ENCODE measurements at regions of chr13 and their contacts with region 1.

Region 1: GRCh38 chr13:50801087-50801931 is 42.2 kb downstream of the DLEU7 start:
- DNase-seq: peak; percentile 13 to 71 (median 56)
- ATAC-seq: peak; percentile 96
- H3K4me3 ChIP-seq: no peak overlapping the region
- H3K4me3 Mint-ChIP-seq: peak overlapping the region in 1 of 10 donors; percentile 39
- H3K27ac ChIP-seq: no peak overlapping the region
- H3K27ac Mint-ChIP-seq: peak overlapping the region in 1 of 9 donors; percentile 20
- H3K4me1 ChIP-seq: peaks cover 0 to 3% of the 10 kb centered on the region in 2 donors
- H3K4me1 Mint-ChIP-seq: peaks cover 0 to 26% (median 6%) of the 10 kb centered on the region in 7 donors
- H3K27me3 ChIP-seq: no peaks in the 10 kb centered on the region
- H3K27me3 Mint-ChIP-seq: peaks cover 0 to 8% (median 0%) of the 10 kb centered on the region in 5 donors

Region 2: DNA sequence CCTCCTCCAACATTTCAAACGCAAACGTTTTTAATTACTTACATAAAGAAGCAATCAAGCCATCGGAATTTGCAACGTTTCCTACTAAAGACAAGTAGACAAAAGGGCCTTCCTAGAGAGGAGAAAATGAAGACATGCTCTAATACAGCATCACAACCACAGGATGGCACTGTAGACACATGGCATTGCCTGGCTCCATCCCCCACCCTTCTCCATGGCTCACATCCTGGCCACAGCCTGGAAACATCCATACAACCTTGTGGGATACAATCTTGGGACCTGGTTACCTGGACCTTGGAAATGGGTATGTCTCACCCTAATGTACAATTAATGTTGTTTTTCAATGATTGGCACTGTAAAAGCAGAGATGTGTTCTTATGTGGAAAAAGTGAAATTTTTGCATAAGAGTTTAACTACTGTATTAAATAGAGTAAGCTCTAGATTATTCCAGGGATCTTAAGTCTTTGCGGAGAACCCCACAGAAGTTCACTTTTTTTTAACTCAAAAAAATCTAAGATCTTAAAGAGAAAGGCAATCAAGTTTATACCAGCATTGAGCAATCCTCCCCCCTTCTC is 1131.5 kb before region 1 on chr13:
- CTCF ChIA-PET with region 1: no interaction called
- POLR2A ChIA-PET with region 1: no interaction called
- intact Hi-C with region 1: loop called in 1 of 2 experiments (anchors 5 kb)
- DNase-seq: peak in 2 of 9 donors; percentile 21 to 37
- ATAC-seq: peak; percentile 76
- H3K4me3 ChIP-seq: no peak overlapping the region
- H3K4me3 Mint-ChIP-seq: no peak overlapping the region
- H3K27ac ChIP-seq: no peak overlapping the region
- H3K27ac Mint-ChIP-seq: no peak overlapping the region
- H3K4me1 ChIP-seq: no peaks in the 10 kb centered on the region
- H3K4me1 Mint-ChIP-seq: peaks cover 0 to 10% (median 3%) of the 10 kb centered on the region in 7 donors
- H3K27me3 ChIP-seq: no peaks in the 10 kb centered on the region
- H3K27me3 Mint-ChIP-seq: no peaks in the 10 kb centered on the region

Region 3: GRCh38 chr13:50116430-50116973 is 684.8 kb before region 1 on chr13:
- CTCF ChIA-PET with region 1: no interaction called
- POLR2A ChIA-PET with region 1: no interaction called
- intact Hi-C with region 1: no loop called
- DNase-seq: no peak
- ATAC-seq: no peak
- H3K4me3 ChIP-seq: no peak overlapping the region
- H3K4me3 Mint-ChIP-seq: peak overlapping the region in 2 of 10 donors; percentile 30 to 53
- H3K27ac ChIP-seq: no peak overlapping the region
- H3K27ac Mint-ChIP-seq: peak overlapping the region in 3 of 9 donors; percentile 11 to 57 (median 45)
- H3K4me1 ChIP-seq: peaks cover 0 to 8% of the 10 kb centered on the region in 2 donors
- H3K4me1 Mint-ChIP-seq: peaks cover 0 to 28% (median 8%) of the 10 kb centered on the region in 7 donors
- H3K27me3 ChIP-seq: no peaks in the 10 kb centered on the region
- H3K27me3 Mint-ChIP-seq: no peaks in the 10 kb centered on the region

Region 4: GRCh38 chr13:50531917-50532899 is 269.1 kb before region 1 on chr13:
- CTCF ChIA-PET with region 1: no interaction called
- POLR2A ChIA-PET with region 1: no interaction called
- intact Hi-C with region 1: loop called (anchors 2 to 5 kb)
- DNase-seq: no peak
- ATAC-seq: no peak
- H3K4me3 ChIP-seq: no peak overlapping the region
- H3K4me3 Mint-ChIP-seq: no peak overlapping the region
- H3K27ac ChIP-seq: no peak overlapping the region
- H3K27ac Mint-ChIP-seq: no peak overlapping the region
- H3K4me1 ChIP-seq: no peaks in the 10 kb centered on the region
- H3K4me1 Mint-ChIP-seq: peaks cover 9 to 28% (median 13%) of the 10 kb centered on the region in 7 donors
- H3K27me3 ChIP-seq: no peaks in the 10 kb centered on the region
- H3K27me3 Mint-ChIP-seq: peaks cover 0 to 17% (median 11%) of the 10 kb centered on the region in 5 donors

Region 5: DNA sequence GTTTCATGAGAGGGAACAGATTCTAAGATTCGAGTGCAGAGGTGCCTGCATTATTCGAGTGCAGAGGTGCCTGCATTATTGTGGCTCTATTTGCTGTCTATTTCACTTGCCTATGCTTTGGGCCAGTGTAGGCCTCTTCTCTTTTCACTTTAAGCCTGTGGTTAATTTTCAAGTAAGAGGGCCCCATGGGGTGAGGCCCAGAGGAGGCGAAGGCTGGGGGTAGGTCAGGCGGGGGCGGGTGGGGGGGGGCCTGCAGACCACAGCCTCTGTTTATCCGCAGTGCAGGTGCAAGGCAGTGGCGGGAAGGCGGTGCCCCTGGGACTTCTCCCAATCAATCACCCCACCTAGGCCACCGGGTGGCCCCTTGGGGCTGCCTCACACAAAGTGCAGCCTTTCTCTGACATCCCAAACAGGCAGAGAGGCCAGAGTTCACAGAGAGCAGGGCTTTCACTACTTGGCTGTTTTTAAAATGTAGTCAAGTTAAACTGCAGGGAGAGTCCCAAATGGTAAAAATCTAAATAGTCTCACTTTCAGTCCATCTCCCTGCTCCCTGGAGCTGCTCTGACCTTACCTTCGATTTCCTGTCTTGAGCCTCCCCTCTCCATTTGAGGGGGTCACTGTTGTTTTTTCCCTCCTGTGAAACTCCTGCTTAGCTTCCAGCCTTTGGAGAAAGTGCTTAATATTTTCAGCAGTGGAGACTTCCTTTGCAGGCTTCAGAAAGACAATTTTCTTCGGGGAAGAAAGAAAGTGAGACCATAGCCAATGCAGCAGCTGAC is 206.8 kb before region 1 on chr13:
- CTCF ChIA-PET with region 1: no interaction called
- POLR2A ChIA-PET with region 1: no interaction called
- intact Hi-C with region 1: loop called in 1 of 2 experiments (anchors 10 kb)
- DNase-seq: peak in 2 of 9 donors; percentile 13 to 40
- ATAC-seq: peak; percentile 38
- H3K4me3 ChIP-seq: no peak overlapping the region
- H3K4me3 Mint-ChIP-seq: peak overlapping the region; percentile 13 to 73 (median 61)
- H3K27ac ChIP-seq: no peak overlapping the region
- H3K27ac Mint-ChIP-seq: peak overlapping the region; percentile 49 to 90 (median 77)
- H3K4me1 ChIP-seq: peaks cover 0 to 13% of the 10 kb centered on the region in 2 donors
- H3K4me1 Mint-ChIP-seq: peaks cover 12 to 43% (median 32%) of the 10 kb centered on the region in 7 donors
- H3K27me3 ChIP-seq: no peaks in the 10 kb centered on the region
- H3K27me3 Mint-ChIP-seq: peaks cover 0 to 7% (median 3%) of the 10 kb centered on the region in 5 donors

Region 6: GRCh38 chr13:50893211-50893852 is 92.0 kb after region 1 on chr13:
- CTCF ChIA-PET with region 1: interaction called, 4 read pairs
- POLR2A ChIA-PET with region 1: no interaction called
- intact Hi-C with region 1: loop called in 1 of 2 experiments (anchors 5 kb)
- DNase-seq: peak in 7 of 9 donors; percentile 34 to 68 (median 55)
- ATAC-seq: peak; percentile 91
- H3K4me3 ChIP-seq: peak overlapping the region; percentile 30
- H3K4me3 Mint-ChIP-seq: peak overlapping the region; percentile 67 to 88 (median 82)
- H3K27ac ChIP-seq: peak overlapping the region; percentile 69
- H3K27ac Mint-ChIP-seq: peak overlapping the region; percentile 82 to 98 (median 95)
- H3K4me1 ChIP-seq: peaks cover 16 to 27% of the 10 kb centered on the region in 2 donors
- H3K4me1 Mint-ChIP-seq: peaks cover 26 to 50% (median 47%) of the 10 kb centered on the region in 7 donors
- H3K27me3 ChIP-seq: no peaks in the 10 kb centered on the region
- H3K27me3 Mint-ChIP-seq: no peaks in the 10 kb centered on the region

Region 7: DNA sequence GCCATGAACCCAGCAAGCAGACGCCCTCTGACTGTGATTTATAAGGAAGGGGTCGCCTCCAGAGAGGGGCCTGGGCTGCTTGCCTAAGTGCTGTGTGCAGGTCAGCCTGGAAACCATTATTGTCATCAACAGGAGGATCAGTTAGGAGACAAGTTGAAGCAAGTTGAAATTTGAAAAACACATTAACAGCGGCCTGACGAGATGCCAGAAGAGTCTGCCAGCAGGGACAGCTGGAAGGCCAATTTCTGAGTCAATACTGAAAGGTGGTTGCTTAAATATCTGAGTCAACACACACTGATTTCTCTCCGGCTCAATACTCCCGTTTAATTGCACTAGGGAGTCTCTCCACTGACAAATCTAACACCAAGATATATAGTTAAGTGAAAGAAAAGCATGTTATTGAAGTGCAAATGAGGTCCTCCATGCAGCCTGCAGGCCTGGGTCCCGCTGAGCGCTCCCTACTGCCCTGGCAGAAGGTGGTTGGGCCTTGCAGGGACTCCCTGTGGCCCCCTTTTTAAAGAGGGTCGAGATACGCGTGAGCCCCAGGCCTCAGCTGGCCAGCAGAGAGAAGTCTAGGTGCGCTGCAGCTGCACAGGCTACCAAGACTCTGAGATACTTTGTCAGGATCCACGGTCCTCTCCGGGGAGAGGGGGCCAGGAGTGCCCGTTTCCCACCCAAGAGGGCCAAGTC is 199.4 kb after region 1 on chr13:
- CTCF ChIA-PET with region 1: no interaction called
- POLR2A ChIA-PET with region 1: no interaction called
- intact Hi-C with region 1: no loop called
- DNase-seq: no peak
- ATAC-seq: no peak
- H3K4me3 ChIP-seq: no peak overlapping the region
- H3K4me3 Mint-ChIP-seq: no peak overlapping the region
- H3K27ac ChIP-seq: no peak overlapping the region
- H3K27ac Mint-ChIP-seq: no peak overlapping the region
- H3K4me1 ChIP-seq: no peaks in the 10 kb centered on the region
- H3K4me1 Mint-ChIP-seq: no peaks in the 10 kb centered on the region
- H3K27me3 ChIP-seq: no peaks in the 10 kb centered on the region
- H3K27me3 Mint-ChIP-seq: peaks cover 0 to 11% (median 8%) of the 10 kb centered on the region in 5 donors

Region 8: GRCh38 chr13:51070005-51070649 is 268.8 kb after region 1 on chr13:
- CTCF ChIA-PET with region 1: no interaction called
- POLR2A ChIA-PET with region 1: no interaction called
- intact Hi-C with region 1: loop called (anchors 1 kb)
- DNase-seq: peak; percentile 43 to 75 (median 66)
- ATAC-seq: peak; percentile 83
- H3K4me3 ChIP-seq: no peak overlapping the region
- H3K4me3 Mint-ChIP-seq: peak overlapping the region in 2 of 10 donors; percentile 7 to 27
- H3K27ac ChIP-seq: no peak overlapping the region
- H3K27ac Mint-ChIP-seq: peak overlapping the region in 1 of 9 donors; percentile 76
- H3K4me1 ChIP-seq: no peaks in the 10 kb centered on the region
- H3K4me1 Mint-ChIP-seq: peaks cover 0 to 37% (median 7%) of the 10 kb centered on the region in 7 donors
- H3K27me3 ChIP-seq: no peaks in the 10 kb centered on the region
- H3K27me3 Mint-ChIP-seq: peaks cover 10 to 25% (median 16%) of the 10 kb centered on the region in 5 donors